Heart right ventricle (tissue), 16 donors: ENCODE measurements at regions of chr5 and their contacts with region 1.

Region 1: DNA sequence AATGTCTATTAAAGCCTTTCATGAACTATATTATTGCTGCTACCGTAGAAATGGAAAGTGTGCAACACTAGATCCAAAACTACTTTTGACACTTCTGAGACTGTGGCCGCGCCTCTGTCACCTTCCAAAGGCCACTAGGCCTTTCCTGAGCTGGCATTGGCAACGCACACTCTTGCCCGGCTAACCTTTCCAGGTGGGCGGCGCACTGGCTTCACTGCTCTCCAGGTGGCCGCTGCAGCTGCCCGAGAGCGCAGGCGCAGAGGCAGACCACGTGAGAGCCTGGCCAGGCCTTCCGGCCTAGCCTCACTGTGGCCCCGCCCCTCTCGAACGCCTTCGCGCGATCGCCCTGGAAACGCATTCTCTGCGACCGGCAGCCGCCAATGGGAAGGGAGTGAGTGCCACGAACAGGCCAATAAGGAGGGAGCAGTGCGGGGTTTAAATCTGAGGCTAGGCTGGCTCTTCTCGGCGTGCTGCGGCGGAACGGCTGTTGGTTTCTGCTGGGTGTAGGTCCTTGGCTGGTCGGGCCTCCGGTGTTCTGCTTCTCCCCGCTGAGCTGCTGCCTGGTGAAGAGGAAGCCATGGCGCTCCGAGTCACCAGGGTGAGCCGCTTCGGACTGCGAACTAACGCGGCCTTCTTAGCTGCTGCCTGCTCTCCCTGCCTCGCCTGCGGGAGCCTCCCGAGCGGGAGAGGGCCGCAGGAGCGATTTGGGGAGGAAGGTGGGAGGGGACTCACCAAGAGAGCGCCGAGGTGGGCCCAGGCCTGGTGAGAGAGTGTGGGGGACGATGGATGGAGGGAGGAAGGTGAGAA is at the start of gene CCNB1:
- DNase-seq: peak; percentile 97 to 98
- ATAC-seq: peak; percentile 100
- H3K4me3 ChIP-seq: peak within 1 kb of the TSS; percentile 47 to 82 (median 68)
- H3K27ac ChIP-seq: peak within 1 kb of the TSS in 6 of 10 donors; percentile 23 to 67 (median 48)
- H3K4me1 ChIP-seq: peaks cover 3 to 24% (median 10%) of the 10 kb centered on the region in 9 donors
- H3K27me3 ChIP-seq: no peaks in the 10 kb centered on the region
- CTCF ChIP-seq: peak in 1 of 9 donors; percentile 28
- total RNA-seq, gene CCNB1: 2.2 to 17.6 (median 3.7) TPM

Region 2: GRCh38 chr5:69093771-69094482 is 73.0 kb before region 1 on chr5 and contains the start of gene SLC30A5:
- intact Hi-C with region 1: loop called in 1 of 10 experiments (anchors 2 kb)
- DNase-seq: peak; percentile 99
- ATAC-seq: peak; percentile 100
- H3K4me3 ChIP-seq: peak within 1 kb of the TSS; percentile 68 to 100 (median 83)
- H3K27ac ChIP-seq: peak within 1 kb of the TSS; percentile 86 to 99 (median 96)
- H3K4me1 ChIP-seq: peaks cover 4 to 38% (median 22%) of the 10 kb centered on the region in 9 donors
- H3K27me3 ChIP-seq: no peaks in the 10 kb centered on the region
- CTCF ChIP-seq: peak; percentile 86 to 99 (median 93)
- total RNA-seq, gene SLC30A5: 25.7 to 36.7 (median 32.1) TPM

Region 3: GRCh38 chr5:69105996-69106906 is 60.6 kb before region 1 on chr5:
- intact Hi-C with region 1: loop called in 2 of 10 experiments (anchors 10 kb)
- DNase-seq: no peak
- ATAC-seq: no peak
- H3K4me3 ChIP-seq: no peak overlapping the region
- H3K27ac ChIP-seq: no peak overlapping the region
- H3K4me1 ChIP-seq: peaks cover 0 to 9% (median 0%) of the 10 kb centered on the region in 9 donors
- H3K27me3 ChIP-seq: no peaks in the 10 kb centered on the region
- CTCF ChIP-seq: no peak

Region 4: DNA sequence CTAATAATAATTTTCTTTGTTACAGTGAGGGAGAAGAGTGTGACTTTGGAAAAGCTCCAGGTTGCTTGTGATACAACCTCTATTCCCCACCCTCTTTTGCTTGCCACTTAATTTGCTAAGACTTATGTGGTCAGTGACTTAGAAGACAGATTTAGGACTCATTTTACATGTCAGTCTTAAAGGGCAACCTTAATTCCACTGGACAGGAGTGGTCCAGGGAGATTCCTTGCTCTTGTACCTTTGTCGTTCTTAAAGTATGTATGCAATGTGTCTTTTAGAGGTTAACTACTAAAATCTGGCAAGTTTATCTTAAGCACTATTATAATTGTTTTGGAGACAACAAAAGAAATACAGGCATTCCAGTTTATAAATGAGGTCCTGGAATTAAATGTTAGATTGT is 53.0 kb before region 1 on chr5:
- intact Hi-C with region 1: loop called in 2 of 10 experiments (anchors 10 kb)
- DNase-seq: no peak
- ATAC-seq: no peak
- H3K4me3 ChIP-seq: no peak overlapping the region
- H3K27ac ChIP-seq: no peak overlapping the region
- H3K4me1 ChIP-seq: no peaks in the 10 kb centered on the region
- H3K27me3 ChIP-seq: no peaks in the 10 kb centered on the region
- CTCF ChIP-seq: no peak

Region 5: DNA sequence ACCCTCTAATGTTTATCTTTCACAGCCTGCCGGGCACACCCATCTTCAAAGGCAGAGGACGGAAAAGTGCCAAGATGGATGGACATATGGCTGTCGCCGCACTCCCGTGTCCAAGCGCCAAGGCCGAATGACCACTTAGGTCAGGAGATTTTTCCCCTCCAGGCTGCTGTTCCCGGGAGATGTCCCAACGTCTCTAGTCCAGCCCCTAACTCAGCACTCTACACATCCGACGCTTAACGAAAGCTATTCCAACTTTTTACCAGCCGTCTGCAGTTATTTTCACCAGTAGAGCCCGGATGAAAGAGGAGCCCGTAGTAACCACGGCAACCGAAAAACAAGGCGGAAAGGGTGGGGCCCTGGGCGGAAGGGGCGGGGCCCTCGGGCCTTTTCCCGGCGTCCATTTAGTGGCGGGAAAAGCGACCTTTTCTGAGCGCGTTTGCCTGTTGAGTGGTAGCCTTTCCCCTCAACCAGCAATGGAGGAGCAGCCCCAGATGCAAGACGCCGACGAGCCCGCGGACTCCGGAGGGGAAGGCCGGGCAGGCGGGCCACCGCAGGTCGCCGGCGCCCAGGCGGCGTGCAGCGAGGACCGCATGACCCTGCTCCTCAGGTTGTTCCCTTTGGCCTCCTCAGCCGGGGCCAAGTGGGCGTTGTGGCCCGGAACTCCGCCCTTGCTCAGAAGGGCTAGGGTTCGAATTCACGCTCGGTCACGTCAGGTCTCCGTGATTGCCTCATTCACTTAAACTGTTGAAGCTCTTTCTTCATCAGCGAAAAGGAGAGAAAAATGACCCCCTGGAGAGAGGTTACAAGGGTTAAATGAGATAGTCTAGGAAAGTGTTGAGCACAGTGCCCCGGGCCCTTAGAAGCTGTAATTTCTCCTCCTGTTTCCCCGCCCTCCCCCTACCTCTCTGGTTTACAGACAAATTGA is 22.5 kb after region 1 on chr5 and contains the start of gene CENPH:
- intact Hi-C with region 1: loop called in 1 of 10 experiments (anchors 2 kb)
- DNase-seq: peak; percentile 87 to 91
- ATAC-seq: peak; percentile 97 to 100 (median 98)
- H3K4me3 ChIP-seq: peak within 1 kb of the TSS; percentile 49 to 93 (median 78)
- H3K27ac ChIP-seq: peak within 1 kb of the TSS in 9 of 10 donors; percentile 35 to 82 (median 76)
- H3K4me1 ChIP-seq: peaks cover 3 to 18% (median 17%) of the 10 kb centered on the region in 9 donors
- H3K27me3 ChIP-seq: no peaks in the 10 kb centered on the region
- CTCF ChIP-seq: no peak
- total RNA-seq, gene CENPH: 2.4 to 5.1 (median 3.4) TPM